Activated naive CD4-positive, alpha-beta T cell treated with anti-CD3 and anti-CD28 coated beads, Interleukin-2, amount 10 ng/mL, durations not matched to agents 7 days and 5 days (primary cell): ENCODE measurements at regions of chr21 and their contacts with region 1.

Region 1: GRCh38 chr21:31580866-31581276 is 78.6 kb upstream of the SOD1 start:
- DNase-seq: peak; percentile 84
- H3K4me3 Mint-ChIP-seq: no peak overlapping the region
- H3K27ac Mint-ChIP-seq: no peak overlapping the region
- H3K4me1 Mint-ChIP-seq: no peaks in the 10 kb centered on the region
- H3K27me3 Mint-ChIP-seq: peaks cover 25% of the 10 kb centered on the region

Region 2: GRCh38 chr21:31107871-31108270 is 473.0 kb before region 1 on chr21:
- CTCF ChIA-PET with region 1: interaction called, 26 read pairs
- DNase-seq: no peak
- H3K4me3 Mint-ChIP-seq: no peak overlapping the region
- H3K27ac Mint-ChIP-seq: no peak overlapping the region
- H3K4me1 Mint-ChIP-seq: peaks cover 26% of the 10 kb centered on the region
- H3K27me3 Mint-ChIP-seq: no peaks in the 10 kb centered on the region

Region 3: GRCh38 chr21:31198575-31198974 is 382.3 kb before region 1 on chr21:
- CTCF ChIA-PET with region 1: interaction called, 82 read pairs
- DNase-seq: no peak
- H3K4me3 Mint-ChIP-seq: no peak overlapping the region
- H3K27ac Mint-ChIP-seq: no peak overlapping the region
- H3K4me1 Mint-ChIP-seq: peaks cover 40% of the 10 kb centered on the region
- H3K27me3 Mint-ChIP-seq: no peaks in the 10 kb centered on the region

Region 4: DNA sequence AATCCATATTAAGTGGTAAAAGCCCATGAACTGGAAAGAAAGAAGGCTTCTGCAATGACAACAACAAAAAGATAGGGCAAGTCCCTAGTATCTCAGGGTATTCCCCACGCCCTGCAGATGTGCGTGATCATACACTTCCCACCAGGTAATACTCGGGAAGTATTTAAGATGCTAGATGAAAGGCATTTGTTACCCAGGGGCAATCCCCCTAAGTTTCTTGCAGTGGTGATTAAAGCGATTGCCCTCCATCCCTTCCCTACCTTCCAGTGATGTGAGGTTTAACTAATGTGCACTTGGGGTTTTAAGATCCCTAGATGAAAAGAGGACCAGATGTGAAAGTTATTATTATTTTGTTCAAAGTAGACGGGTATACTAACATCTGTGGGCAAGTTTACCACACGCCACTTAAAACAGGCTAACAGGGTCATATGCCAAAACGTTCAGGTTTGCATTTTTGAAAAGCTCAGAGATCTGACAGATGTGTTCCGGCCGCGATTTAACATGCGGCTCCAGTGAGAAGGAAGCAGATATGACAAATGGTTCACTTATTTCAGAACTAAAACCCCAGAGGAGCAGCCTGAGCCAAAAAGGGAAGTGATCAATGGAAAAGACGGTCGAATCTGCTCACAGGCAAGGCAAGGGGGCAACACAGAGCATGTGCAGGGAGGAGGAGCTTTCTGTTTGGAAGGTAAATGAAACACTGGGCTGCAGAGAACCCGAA is 254.2 kb before region 1 on chr21:
- CTCF ChIA-PET with region 1: interaction called, 10 read pairs
- DNase-seq: peak; percentile 61
- H3K4me3 Mint-ChIP-seq: peak overlapping the region; percentile 27
- H3K27ac Mint-ChIP-seq: peak overlapping the region; percentile 79
- H3K4me1 Mint-ChIP-seq: peaks cover 24% of the 10 kb centered on the region
- H3K27me3 Mint-ChIP-seq: no peaks in the 10 kb centered on the region

Region 5: DNA sequence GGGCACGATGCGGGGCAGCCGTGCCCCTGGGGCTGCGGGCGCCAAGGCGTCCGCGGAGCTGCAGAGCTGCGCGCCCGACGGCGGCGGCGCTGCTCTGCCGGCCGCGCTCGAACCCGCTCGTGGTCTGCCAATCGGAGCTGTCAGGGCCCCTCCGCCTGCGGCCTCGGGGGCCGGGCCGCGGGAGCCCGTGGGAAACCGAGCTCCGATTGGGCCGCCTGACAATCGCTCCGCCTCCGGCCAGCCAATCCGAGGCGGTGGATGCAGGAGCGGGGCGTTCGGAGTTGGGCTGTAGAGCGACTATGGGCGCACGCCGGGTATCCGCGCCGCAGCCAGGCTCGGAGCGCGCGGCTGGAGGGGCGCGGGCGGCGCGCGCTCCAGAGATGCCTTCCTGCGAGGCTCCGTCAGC is 21.9 kb before region 1 on chr21:
- CTCF ChIA-PET with region 1: interaction called, 12 read pairs
- DNase-seq: peak; percentile 96
- H3K4me3 Mint-ChIP-seq: peak overlapping the region; percentile 86
- H3K27ac Mint-ChIP-seq: no peak overlapping the region
- H3K4me1 Mint-ChIP-seq: peaks cover 50% of the 10 kb centered on the region
- H3K27me3 Mint-ChIP-seq: peaks cover 42% of the 10 kb centered on the region

Region 6: GRCh38 chr21:31983120-31983519 is 402.2 kb after region 1 on chr21:
- CTCF ChIA-PET with region 1: no interaction called
- DNase-seq: no peak
- H3K4me3 Mint-ChIP-seq: no peak overlapping the region
- H3K27ac Mint-ChIP-seq: no peak overlapping the region
- H3K4me1 Mint-ChIP-seq: no peaks in the 10 kb centered on the region
- H3K27me3 Mint-ChIP-seq: peaks cover 10% of the 10 kb centered on the region